ENCODE measurements at regions of chr9 and their contacts with region 1.

Region 1: DNA sequence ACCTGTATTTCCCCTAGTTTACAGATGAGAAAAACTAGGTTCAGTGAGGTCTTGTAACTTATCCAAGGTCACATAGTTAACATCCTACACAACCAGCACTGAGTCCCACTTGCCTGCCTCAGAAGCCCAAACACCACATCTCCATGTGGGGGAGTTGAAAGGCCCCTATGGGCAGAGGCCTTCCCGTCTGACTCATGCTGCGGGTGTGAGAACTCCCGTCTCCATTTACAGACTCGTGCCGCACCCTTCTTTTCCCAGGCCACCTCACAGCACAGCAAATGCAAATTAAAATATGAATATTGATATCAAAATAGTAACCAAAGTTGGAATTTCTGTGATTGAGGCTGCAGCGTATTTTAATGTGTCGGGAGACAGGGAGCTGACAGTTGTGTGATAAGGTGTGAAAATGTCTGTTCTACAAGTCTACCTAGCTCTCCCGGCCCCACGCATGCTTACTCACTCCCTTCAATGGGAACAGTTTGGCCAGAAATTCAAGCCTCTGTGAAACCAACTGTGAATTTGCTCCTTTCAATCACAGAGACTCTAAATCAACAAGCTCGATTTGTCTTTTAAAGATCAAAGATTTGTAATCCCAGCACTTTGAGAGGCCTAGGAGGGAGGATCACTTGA is 90.1 kb downstream of the CRB2 start:
- DNase-seq: no peak
- ATAC-seq: no peak
- H3K4me3 Mint-ChIP-seq: no peak overlapping the region
- H3K27ac Mint-ChIP-seq: no peak overlapping the region
- H3K4me1 Mint-ChIP-seq: no peaks in the 10 kb centered on the region
- H3K27me3 Mint-ChIP-seq: no peaks in the 10 kb centered on the region
- CTCF ChIP-seq: no peak

Region 2: GRCh38 chr9:123508048-123508447 is 62.0 kb after region 1 on chr9:
- CTCF ChIA-PET with region 1: no interaction called
- POLR2A ChIA-PET with region 1: no interaction called
- intact Hi-C with region 1: loop called (anchors 10 kb)
- DNase-seq: no peak
- ATAC-seq: no peak
- H3K4me3 Mint-ChIP-seq: no peak overlapping the region
- H3K27ac Mint-ChIP-seq: no peak overlapping the region
- H3K4me1 Mint-ChIP-seq: no peaks in the 10 kb centered on the region
- H3K27me3 Mint-ChIP-seq: no peaks in the 10 kb centered on the region
- CTCF ChIP-seq: no peak